AG04450 (cell line): ENCODE measurements at regions of chr10 and their contacts with region 1.

Region 1: DNA sequence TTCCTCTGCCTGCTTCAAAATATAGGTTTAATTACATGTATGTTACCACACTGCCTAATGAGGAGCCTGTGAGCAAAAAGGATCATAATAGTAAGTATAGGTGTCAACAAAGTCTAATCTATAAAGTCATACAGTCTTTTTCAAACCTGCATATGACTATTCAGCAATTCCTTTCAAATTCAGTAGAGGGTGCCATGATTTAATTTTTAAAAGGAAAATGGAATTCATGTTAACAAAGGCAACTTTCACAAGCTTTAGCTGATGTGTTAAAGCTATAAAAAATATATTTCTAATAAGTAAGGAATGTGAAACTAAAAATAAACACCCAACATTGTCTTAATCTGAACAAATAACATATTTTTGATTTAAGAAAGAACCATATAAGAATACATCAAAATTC is 52.1 kb downstream of the MPP7 start:
- DNase-seq: no peak
- H3K4me3 ChIP-seq: no peak overlapping the region
- H3K27ac ChIP-seq: no peak overlapping the region
- H3K27me3 ChIP-seq: peaks cover 11% of the 10 kb centered on the region
- CTCF ChIP-seq: peak; percentile 51

Region 2: DNA sequence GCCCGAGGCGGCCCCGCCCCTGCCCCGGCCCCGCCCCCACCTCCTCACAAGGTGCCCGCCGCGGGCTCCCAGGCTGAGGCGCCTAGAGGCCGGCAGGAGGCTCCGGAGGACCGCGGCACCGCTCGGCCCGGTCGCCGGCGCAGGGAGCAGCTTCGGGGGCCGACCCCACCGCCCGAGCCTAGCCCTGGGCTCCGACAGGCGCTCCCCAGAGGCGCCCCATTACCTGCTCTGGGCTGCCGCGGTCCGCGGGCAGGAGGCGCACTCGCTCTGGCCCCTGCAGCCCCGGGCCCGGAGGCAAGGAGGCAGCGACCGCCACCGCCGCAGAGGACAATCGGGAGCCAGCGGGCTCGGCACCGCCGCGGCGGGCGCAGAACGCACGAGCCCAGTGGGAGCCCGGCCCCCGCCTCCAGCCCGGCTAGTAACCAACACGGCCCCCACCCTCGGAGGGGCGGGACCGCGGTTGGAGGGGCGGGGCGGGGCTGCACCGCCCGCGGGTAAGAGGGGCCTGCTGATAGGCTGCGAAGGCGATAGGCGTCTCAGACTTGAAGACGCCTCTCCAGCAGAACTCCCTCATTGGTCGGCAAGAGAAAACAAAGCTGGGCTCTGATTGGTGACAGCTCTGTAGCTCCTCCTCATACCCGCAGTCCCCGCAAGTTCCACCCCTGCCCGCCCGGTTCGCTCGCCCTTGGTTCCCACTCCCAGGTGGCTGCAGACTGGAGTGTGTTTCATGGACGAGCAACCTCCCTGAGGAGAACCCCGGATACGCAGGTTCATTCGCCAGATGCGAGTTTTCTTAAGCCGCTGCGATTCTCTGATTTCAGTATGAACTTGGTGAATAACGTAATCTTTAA is 52.1 kb after region 1 on chr10 and contains the start of gene MPP7:
- CTCF ChIA-PET with region 1: interaction called, 11 read pairs
- POLR2A ChIA-PET with region 1: no interaction called
- DNase-seq: peak; percentile 96
- H3K4me3 ChIP-seq: peak within 1 kb of the TSS; percentile 65
- H3K27ac ChIP-seq: no peak within 1 kb of the TSS
- H3K27me3 ChIP-seq: peaks cover 43% of the 10 kb centered on the region
- CTCF ChIP-seq: peak; percentile 19
- polyA plus RNA-seq, gene MPP7: 0.61 and 0.94 TPM in 2 replicates

Region 3: DNA sequence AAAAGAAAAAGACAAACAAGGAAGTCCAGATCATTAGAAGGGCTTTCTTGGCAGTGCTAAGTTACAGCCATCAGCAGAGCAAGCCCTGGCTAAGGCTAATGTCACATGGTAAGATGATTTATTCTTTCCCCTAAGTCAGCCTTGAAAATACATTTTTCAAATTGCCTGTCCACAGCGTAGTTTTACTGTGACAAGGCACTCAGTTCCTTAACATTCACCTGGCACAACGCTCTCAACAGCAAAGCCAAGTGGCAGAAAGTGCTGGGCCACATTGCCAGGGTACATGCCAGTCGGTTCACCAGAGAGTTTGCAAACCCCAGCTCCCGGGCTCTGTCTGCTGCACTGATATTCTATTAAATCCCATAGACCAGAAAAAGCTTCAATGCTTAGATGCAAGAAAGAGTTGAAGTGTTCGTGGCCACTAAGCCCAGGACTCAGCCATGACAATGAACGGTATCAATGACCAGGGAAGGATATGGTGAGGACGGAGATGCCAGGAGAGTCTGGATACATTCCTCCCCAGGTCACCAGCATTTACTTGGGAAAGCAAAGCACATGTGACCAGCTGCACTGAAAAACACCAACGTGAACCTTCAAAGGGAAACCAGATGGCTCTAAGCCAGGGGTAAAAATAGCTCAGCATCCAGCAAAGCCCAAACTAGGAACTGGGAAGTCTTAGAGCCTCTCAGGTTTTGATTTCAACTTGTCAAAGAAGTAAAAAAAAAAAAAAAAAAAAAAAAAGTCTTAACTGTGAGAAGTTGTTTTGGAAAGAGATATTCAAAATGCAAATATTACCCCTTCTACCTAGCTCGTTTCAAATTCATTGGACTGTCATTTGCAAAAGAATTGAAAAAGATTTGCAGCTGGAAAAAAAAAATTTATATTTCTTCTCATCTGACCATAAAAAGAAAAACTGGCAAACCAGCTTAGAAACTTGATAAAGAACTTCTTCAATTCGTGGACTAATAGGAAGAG is 76.0 kb after region 1 on chr10:
- CTCF ChIA-PET with region 1: interaction called, 11 read pairs
- POLR2A ChIA-PET with region 1: no interaction called
- DNase-seq: no peak
- H3K4me3 ChIP-seq: no peak overlapping the region
- H3K27ac ChIP-seq: no peak overlapping the region
- H3K27me3 ChIP-seq: no peaks in the 10 kb centered on the region
- CTCF ChIP-seq: no peak

Region 4: GRCh38 chr10:28393966-28394568 is 143.3 kb after region 1 on chr10:
- CTCF ChIA-PET with region 1: interaction called, 47 read pairs
- POLR2A ChIA-PET with region 1: no interaction called
- DNase-seq: peak; percentile 34
- H3K4me3 ChIP-seq: no peak overlapping the region
- H3K27ac ChIP-seq: no peak overlapping the region
- H3K27me3 ChIP-seq: peaks cover 2% of the 10 kb centered on the region
- CTCF ChIP-seq: peak; percentile 97